ENCODE measurements at regions of chr2 and their contacts with region 1.

Region 1: GRCh38 chr2:200525882-200526651 is at the start of gene SGO2:
- DNase-seq: peak; percentile 95
- H3K4me3 Mint-ChIP-seq: peak within 1 kb of the TSS; percentile 94
- H3K27ac Mint-ChIP-seq: peak within 1 kb of the TSS; percentile 89
- H3K4me1 Mint-ChIP-seq: peaks cover 32% of the 10 kb centered on the region
- H3K27me3 Mint-ChIP-seq: no peaks in the 10 kb centered on the region
- total RNA-seq, gene SGO2: 20.5 and 20.9 TPM in 2 replicates

Region 2: GRCh38 chr2:199911052-199911876 is 614.8 kb before region 1 on chr2 and contains the start of gene C2orf69:
- intact Hi-C with region 1: loop called (anchors 1 kb)
- DNase-seq: peak; percentile 86
- H3K4me3 Mint-ChIP-seq: peak within 1 kb of the TSS; percentile 100
- H3K27ac Mint-ChIP-seq: peak within 1 kb of the TSS; percentile 99
- H3K4me1 Mint-ChIP-seq: peaks cover 39% of the 10 kb centered on the region
- H3K27me3 Mint-ChIP-seq: peaks cover 3% of the 10 kb centered on the region
- total RNA-seq, gene C2orf69: 16.6 and 18.0 TPM in 2 replicates

Region 3: DNA sequence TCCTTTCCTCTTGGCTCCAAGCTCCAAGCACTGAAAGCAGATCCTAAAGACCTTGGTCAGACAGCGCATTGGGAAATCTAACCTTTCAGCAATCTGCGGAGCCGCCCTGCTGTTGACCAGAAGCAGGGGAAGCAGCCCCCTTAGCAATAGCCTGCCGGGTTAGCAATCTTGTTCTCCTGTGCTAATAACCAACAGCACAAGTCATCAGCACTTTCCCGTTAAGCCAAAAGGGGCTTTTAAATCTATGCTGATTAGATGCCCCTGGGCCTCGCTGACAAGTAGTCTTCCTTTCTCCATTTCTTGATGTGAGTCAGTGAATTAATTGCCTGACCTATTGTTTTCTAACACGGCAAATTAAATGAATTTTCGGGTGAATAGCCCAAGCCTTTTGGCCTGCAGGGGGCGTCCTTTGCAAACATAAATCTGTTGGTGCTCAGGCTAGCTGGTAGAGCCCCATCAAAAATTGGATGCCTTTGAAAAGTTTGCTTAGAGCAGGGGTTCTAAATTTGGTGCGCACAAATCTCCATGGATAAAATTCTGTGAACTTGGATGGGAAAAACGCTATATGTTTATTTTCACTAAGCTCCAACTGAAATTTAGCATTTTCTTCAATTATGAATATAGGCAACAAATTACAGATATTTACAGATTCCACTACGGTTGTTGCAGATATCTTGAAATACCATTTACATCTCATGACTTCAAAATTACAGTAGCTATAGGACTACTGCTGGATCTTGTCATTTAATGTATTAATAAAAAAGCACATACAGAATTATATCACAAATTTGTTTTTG is 546.0 kb before region 1 on chr2:
- intact Hi-C with region 1: loop called (anchors 2 kb)
- DNase-seq: peak; percentile 62
- H3K4me3 Mint-ChIP-seq: no peak overlapping the region
- H3K27ac Mint-ChIP-seq: no peak overlapping the region
- H3K4me1 Mint-ChIP-seq: peaks cover 28% of the 10 kb centered on the region
- H3K27me3 Mint-ChIP-seq: no peaks in the 10 kb centered on the region

Region 4: DNA sequence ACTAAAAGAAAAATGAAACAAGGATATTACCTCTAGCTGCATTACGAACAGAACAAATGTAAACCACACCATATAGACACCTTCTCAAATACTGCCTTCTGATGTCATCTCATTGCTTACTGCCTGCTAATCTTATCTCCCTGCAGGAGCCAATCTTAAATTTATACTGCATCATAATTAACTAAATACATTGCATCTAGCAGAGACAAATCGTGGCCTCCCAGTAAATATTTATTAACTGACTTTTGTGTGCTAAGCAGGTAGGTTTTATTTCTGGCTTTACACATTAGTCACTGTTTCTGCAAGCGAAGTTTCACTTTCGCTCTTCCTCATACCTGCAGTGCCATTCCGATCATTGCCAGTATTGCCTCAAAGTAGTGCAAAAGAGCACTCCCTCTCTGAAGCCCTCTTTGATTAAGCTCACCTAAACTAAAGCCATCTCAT is 152.1 kb before region 1 on chr2:
- intact Hi-C with region 1: loop called (anchors 5 kb)
- DNase-seq: peak; percentile 49
- H3K4me3 Mint-ChIP-seq: peak overlapping the region; percentile 79
- H3K27ac Mint-ChIP-seq: peak overlapping the region; percentile 86
- H3K4me1 Mint-ChIP-seq: peaks cover 55% of the 10 kb centered on the region
- H3K27me3 Mint-ChIP-seq: no peaks in the 10 kb centered on the region

Region 5: DNA sequence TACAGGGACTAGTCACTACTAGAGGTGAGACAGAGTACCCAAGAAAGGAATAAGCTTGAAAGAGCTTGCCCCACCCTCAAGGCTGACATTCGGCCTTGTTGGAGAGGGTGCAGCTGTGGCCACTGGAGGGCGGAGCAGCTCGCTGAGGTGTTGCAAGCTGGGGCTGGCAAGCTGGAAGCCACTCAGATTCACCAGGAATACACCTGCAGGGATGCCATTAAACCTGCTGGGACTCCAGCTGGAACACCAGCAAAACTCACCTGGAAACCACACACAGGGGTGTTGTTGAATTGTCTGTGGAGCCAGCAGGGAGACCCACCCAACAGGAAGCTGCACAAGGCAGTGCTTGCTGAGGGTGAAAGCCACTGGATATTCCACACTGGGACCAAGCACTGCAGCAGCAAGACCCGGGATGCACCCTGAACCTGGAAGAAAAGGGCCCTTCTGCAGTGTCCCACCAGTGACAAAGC is 42.3 kb before region 1 on chr2:
- intact Hi-C with region 1: no loop called
- DNase-seq: no peak
- H3K4me3 Mint-ChIP-seq: no peak overlapping the region
- H3K27ac Mint-ChIP-seq: no peak overlapping the region
- H3K4me1 Mint-ChIP-seq: peaks cover 7% of the 10 kb centered on the region
- H3K27me3 Mint-ChIP-seq: no peaks in the 10 kb centered on the region

Region 6: DNA sequence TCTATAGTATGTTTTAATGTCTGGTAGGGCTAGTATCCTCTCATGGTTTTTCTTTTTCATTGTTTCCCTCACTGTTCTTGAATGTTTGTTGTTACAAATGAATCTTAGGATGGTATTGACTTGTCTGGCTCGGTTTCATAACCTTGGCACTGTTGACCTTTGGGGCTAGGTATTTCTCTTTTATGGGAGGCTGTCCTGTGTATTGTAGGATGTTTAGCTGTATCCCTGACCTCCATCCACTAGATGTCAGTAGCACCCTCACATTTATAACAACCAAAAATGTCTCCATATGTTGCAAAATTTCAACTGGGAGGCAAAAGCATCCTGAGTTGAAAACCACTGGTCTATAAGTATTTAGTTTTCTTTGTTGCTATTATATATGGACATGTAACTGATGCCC is 52.7 kb after region 1 on chr2:
- intact Hi-C with region 1: loop called (anchors 5 kb)
- DNase-seq: no peak
- H3K4me3 Mint-ChIP-seq: no peak overlapping the region
- H3K27ac Mint-ChIP-seq: no peak overlapping the region
- H3K4me1 Mint-ChIP-seq: peaks cover 18% of the 10 kb centered on the region
- H3K27me3 Mint-ChIP-seq: no peaks in the 10 kb centered on the region

Region 7: GRCh38 chr2:200888704-200889625 is 362.9 kb after region 1 on chr2 and contains the starts of genes NIF3L1 and PPIL3:
- intact Hi-C with region 1: loop called (anchors 1 kb)
- DNase-seq: peak; percentile 96
- H3K4me3 Mint-ChIP-seq: peak within 1 kb of the TSS; percentile 97
- H3K27ac Mint-ChIP-seq: peak within 1 kb of the TSS; percentile 99
- H3K4me1 Mint-ChIP-seq: peaks cover 54% of the 10 kb centered on the region
- H3K27me3 Mint-ChIP-seq: no peaks in the 10 kb centered on the region
- total RNA-seq, gene NIF3L1: 26.6 and 27.3 TPM in 2 replicates
- total RNA-seq, gene PPIL3: 44.2 TPM in 2 replicates

Region 8: DNA sequence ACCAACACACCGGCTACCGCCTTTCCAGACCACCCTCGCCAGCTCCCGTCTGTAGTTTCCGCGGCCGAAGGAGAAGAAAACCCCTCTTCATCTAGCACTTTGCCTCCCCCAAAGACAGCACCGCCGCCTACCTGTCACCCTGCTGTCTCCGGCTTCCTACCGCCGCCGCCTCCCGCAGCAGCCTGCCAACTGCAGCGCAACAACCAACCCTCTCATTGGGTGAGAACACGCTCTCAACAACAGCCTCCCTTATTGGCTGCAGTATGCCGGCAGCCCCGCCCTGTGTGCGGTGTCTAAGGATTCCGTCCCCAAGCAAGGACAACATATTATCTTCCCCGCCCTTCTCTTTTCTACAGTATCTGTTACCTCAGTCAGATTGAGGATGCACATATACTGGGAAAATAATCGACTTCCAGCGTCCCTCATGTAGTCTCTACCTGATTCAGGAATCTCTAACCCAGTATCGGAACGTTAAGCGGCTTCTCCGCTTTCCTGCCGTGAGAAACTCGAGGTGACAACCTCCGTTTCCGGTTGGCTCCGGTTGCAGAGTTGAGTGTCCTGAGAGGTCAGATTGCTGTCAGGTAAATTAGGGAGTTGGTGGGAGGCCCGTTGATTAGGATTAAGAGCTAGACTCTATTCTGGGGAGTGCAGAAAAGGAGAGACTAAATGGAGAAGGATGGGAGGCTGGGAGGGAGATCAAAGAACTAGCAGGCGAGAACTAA is 545.6 kb after region 1 on chr2 and contains the starts of genes HYCC2 and NDUFB3:
- intact Hi-C with region 1: loop called (anchors 5 kb)
- DNase-seq: peak; percentile 90
- H3K4me3 Mint-ChIP-seq: peak within 1 kb of the TSS; percentile 90
- H3K27ac Mint-ChIP-seq: peak within 1 kb of the TSS; percentile 95
- H3K4me1 Mint-ChIP-seq: peaks cover 49% of the 10 kb centered on the region
- H3K27me3 Mint-ChIP-seq: no peaks in the 10 kb centered on the region
- total RNA-seq, gene HYCC2: 26.1 and 29.4 TPM in 2 replicates
- total RNA-seq, gene NDUFB3: 105 and 121 TPM in 2 replicates

Measured in activated T-helper 1 cell treated with anti-CD3 and anti-CD28 coated beads, Interleukin-12 subunit alpha, Interleukin-12 subunit beta, Interleukin-2, Interleukin-4 antibody, amounts not matched to agents 30 ng/mL and 10 ng/mL and 1 ng/mL, durations not matched to agents 14 hours and 24 hours and 36 hours (primary cell).